Heart left ventricle (tissue), 16 donors: ENCODE measurements at regions of chr4 and their contacts with region 1.

Region 1: GRCh38 chr4:15001869-15002658 is at the start of gene CPEB2:
- DNase-seq: peak; percentile 95 to 98 (median 96)
- ATAC-seq: peak; percentile 86 to 90 (median 87)
- H3K4me3 ChIP-seq: peak within 1 kb of the TSS; percentile 59 to 99 (median 92)
- H3K27ac ChIP-seq: peak within 1 kb of the TSS; percentile 98 to 100 (median 100)
- H3K4me1 ChIP-seq: peaks cover 0 to 27% (median 16%) of the 10 kb centered on the region in 12 donors
- H3K27me3 ChIP-seq: no peaks in the 10 kb centered on the region
- CTCF ChIP-seq: no peak
- POLR2A ChIP-seq: peak; percentile 89 to 100
- total RNA-seq, gene CPEB2: 11.5 to 26.1 (median 20.3) TPM

Region 2: GRCh38 chr4:14348506-14348905 is 653.6 kb before region 1 on chr4:
- intact Hi-C with region 1: no loop called
- DNase-seq: no peak
- ATAC-seq: no peak
- H3K4me3 ChIP-seq: no peak overlapping the region
- H3K27ac ChIP-seq: no peak overlapping the region
- H3K4me1 ChIP-seq: peaks cover 0 to 11% (median 6%) of the 10 kb centered on the region in 12 donors
- H3K27me3 ChIP-seq: no peaks in the 10 kb centered on the region
- CTCF ChIP-seq: no peak
- POLR2A ChIP-seq: no peak

Region 3: DNA sequence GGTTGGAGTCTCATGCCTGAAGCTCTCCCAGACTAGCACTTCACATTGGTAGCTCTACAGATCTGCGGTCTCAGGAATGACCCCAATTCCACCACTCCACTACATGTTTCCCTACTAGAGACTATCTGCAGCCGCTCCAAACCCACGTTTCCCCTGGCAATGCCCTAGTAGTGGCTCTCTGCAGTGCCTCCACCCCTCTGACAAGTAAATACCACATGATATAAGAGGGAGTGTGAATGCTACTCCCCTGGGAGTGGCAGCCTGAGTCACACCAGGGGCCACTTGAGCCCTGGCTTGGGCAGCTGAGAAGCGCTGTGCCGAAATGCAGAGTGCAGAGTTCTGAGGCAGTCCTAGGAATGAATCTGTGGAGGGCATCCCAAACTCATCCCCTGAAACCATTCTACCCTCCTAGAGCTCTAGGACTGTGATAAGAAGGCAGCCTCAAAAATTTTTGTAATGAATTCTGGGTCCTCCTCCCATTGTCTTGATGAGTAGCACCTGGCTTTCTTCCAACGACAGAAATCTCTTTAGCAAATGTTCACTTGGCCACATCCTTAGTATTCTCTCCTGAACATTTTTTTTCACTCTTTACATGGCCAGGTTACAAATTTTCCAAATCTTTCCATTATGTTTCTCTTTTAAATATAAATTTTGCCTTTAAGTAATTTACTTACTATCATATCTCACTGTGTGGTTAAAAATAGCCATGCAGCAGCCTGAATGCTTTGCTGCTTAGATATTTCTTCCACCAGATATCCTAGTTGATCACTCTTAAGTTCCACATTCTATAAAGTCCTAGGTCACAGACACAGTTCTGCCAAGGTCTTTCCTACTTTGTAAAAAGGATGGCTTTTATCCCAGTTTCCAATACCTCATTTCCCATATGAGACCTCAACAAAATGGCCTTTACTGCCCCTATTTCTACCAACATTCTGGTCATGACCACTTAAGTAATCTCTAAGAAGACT is 160.0 kb before region 1 on chr4:
- intact Hi-C with region 1: loop called in 2 of 10 experiments (anchors 2 to 10 kb)
- DNase-seq: peak; percentile 48 to 78 (median 72)
- ATAC-seq: peak; percentile 81 to 97 (median 96)
- H3K4me3 ChIP-seq: peak overlapping the region in 1 of 12 donors; percentile 5
- H3K27ac ChIP-seq: peak overlapping the region; percentile 4 to 81 (median 55)
- H3K4me1 ChIP-seq: peaks cover 0 to 23% (median 14%) of the 10 kb centered on the region in 12 donors
- H3K27me3 ChIP-seq: no peaks in the 10 kb centered on the region
- CTCF ChIP-seq: no peak
- POLR2A ChIP-seq: no peak

Region 4: DNA sequence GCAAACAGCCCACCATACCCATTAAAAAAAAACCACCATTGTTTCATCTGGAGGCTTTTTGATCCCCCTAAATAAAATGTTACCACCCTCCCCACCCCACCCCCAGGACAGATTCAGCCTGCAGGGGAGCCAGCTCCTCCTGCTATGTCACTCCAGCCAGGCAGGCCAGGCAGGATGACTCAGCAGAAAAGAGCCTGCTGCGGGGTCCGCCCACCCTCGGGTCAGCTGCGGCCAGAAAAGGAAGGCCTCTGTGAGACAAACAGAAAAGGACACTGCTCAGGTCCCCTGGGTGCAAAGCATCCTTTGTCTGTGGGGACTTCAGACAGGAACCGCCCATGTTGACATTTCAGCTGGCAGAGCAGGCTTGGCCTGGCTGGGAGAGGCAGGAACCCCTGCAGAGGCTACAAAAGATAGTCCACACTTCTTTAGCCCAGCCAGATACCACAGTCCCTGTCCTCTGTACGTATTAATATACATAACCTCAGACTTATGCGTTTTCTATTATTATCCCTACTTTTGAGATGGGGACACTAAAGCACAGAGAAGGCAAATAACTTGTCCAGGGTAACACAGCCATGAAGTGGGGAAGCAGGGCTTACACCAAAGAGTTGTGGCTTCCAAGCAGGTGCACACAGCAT is 147.9 kb after region 1 on chr4:
- intact Hi-C with region 1: loop called in 8 of 10 experiments (anchors 2 to 10 kb)
- DNase-seq: peak; percentile 82 to 89 (median 85)
- ATAC-seq: peak; percentile 81 to 95 (median 93)
- H3K4me3 ChIP-seq: no peak overlapping the region
- H3K27ac ChIP-seq: peak overlapping the region in 11 of 12 donors; percentile 22 to 73 (median 55)
- H3K4me1 ChIP-seq: peaks cover 0 to 48% (median 17%) of the 10 kb centered on the region in 12 donors
- H3K27me3 ChIP-seq: no peaks in the 10 kb centered on the region
- CTCF ChIP-seq: peak in 3 of 12 donors; percentile 17 to 23 (median 22)
- POLR2A ChIP-seq: no peak

Region 5: GRCh38 chr4:15410750-15411149 is 408.7 kb after region 1 on chr4:
- intact Hi-C with region 1: loop called in 1 of 10 experiments (anchors 10 kb)
- DNase-seq: no peak
- ATAC-seq: no peak
- H3K4me3 ChIP-seq: no peak overlapping the region
- H3K27ac ChIP-seq: peak overlapping the region in 3 of 12 donors; percentile 8 to 24 (median 21)
- H3K4me1 ChIP-seq: peaks cover 0 to 44% (median 14%) of the 10 kb centered on the region in 12 donors
- H3K27me3 ChIP-seq: no peaks in the 10 kb centered on the region
- CTCF ChIP-seq: no peak
- POLR2A ChIP-seq: no peak

Region 6: GRCh38 chr4:15469402-15470127 is 467.5 kb after region 1 on chr4 and contains the start of gene CC2D2A:
- intact Hi-C with region 1: loop called in 1 of 10 experiments (anchors 10 kb)
- DNase-seq: peak in 2 of 5 donors; percentile 22 to 35
- ATAC-seq: peak; percentile 78 to 94 (median 90)
- H3K4me3 ChIP-seq: peak within 1 kb of the TSS; percentile 28 to 76 (median 62)
- H3K27ac ChIP-seq: peak within 1 kb of the TSS in 11 of 12 donors; percentile 1 to 74 (median 42)
- H3K4me1 ChIP-seq: peaks cover 0 to 37% (median 12%) of the 10 kb centered on the region in 12 donors
- H3K27me3 ChIP-seq: no peaks in the 10 kb centered on the region
- CTCF ChIP-seq: no peak
- POLR2A ChIP-seq: no peak
- total RNA-seq, gene CC2D2A: 3.1 to 14.4 (median 9.0) TPM